Panc1 (cell line): ENCODE measurements at regions of chr19 and their contacts with region 1.

Region 1: DNA sequence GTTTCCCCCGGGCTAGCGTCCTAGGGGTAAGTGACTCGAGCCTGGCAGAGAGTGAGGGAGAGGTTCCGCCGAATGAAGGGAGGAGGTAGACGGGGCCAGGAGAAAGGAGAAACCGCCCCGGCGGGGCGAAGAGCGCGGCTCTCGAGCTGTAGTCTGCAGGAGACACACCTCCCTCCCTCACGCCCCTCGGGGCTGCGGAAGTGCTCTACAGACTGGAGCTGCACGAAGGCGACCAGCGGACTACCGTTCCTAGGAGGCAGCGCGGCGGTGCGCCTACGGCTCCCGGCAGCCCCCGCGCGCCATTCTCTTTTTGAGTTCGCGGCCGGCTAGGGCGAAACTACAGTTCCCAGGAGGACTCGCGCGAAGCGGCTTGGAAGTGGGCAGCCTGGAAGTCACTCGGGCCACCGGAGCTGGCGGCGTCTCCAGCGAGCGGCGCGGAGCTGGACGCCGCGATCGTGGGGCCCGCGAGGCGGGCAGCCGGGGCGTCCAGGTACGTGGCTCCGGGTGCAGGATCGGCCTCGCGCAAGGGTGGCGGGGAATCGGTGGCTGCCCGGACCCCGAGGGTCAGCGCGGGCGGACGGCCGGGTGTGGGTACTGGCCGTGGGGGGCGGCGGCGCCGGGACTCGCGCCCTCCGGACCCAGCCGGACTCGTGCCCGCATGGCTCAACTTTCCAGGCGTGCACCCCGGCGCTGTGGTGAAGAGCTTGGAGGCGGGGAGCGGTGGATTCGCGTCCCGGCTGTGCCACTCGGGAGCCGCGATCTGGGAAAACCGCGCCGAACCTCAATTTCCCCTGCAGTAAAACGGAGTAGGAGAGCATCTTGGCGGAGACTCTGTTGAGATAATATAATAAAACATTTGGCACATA is at the start of gene SIPA1L3:
- DNase-seq: peak; percentile 80
- ATAC-seq: peak; percentile 98
- H3K4me3 ChIP-seq: peak within 1 kb of the TSS; percentile 76 to 97
- H3K27ac ChIP-seq: peak within 1 kb of the TSS; percentile 75
- H3K4me1 ChIP-seq: peaks cover 10% of the 10 kb centered on the region
- H3K27me3 ChIP-seq: no peaks in the 10 kb centered on the region
- CTCF ChIP-seq: no peak
- total RNA-seq, gene SIPA1L3: 66.3 TPM

Region 2: GRCh38 chr19:37931881-37932655 is 25.0 kb after region 1 on chr19:
- CTCF ChIA-PET with region 1: interaction called, 12 read pairs
- POLR2A ChIA-PET with region 1: interaction called, 6 read pairs
- in situ Hi-C with region 1: no loop called
- intact Hi-C with region 1: no loop called
- DNase-seq: peak; percentile 47
- ATAC-seq: peak; percentile 87
- H3K4me3 ChIP-seq: peak overlapping the region; percentile 53 to 74
- H3K27ac ChIP-seq: peak overlapping the region; percentile 96
- H3K4me1 ChIP-seq: peaks cover 35% of the 10 kb centered on the region
- H3K27me3 ChIP-seq: no peaks in the 10 kb centered on the region
- CTCF ChIP-seq: no peak

Region 3: DNA sequence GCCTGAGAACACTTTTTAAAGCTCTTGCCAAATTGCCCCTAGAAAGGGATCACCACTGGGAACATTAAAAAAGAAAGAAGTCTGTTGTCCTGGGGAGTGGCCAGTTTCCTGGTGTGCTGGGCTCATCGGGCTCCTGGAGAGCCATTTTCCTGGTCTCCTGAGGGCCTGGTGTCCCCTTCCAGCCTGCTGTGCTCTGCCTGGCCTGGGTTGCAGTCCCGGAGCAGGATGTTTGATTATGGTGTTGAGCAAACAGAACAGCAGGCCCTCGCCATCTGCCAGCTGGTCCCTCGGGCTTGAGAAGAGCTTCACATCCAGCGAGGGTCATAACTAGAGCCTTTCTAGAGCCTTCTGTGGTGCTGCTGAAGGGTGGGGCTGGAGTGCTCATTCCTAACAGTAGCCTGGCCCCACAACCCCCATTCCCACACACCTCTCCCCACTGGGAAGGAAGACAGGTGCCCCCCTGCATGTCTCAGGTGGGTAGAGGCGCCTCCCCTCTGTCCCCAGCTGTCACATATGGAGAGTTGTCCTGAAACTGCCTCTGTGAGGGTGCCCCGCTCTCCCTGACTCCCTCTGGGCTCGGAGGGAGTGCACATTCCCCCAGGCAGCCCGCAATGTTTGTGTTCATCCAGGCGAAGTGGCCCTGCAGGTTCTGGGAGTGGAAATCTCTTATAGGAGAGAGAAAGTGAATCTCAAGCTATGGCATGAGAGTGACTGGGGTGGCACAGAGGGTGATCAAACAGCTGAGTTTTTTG is 151.0 kb after region 1 on chr19:
- CTCF ChIA-PET with region 1: interaction called, 4 read pairs
- POLR2A ChIA-PET with region 1: no interaction called
- in situ Hi-C with region 1: no loop called
- intact Hi-C with region 1: loop called (anchors 10 kb)
- DNase-seq: no peak
- ATAC-seq: peak; percentile 75
- H3K4me3 ChIP-seq: peak overlapping the region in 1 of 2 experiments; percentile 6; a peak in 2 of 4 replicates
- H3K27ac ChIP-seq: peak overlapping the region; percentile 62
- H3K4me1 ChIP-seq: peaks cover 11% of the 10 kb centered on the region
- H3K27me3 ChIP-seq: no peaks in the 10 kb centered on the region
- CTCF ChIP-seq: no peak

Region 4: GRCh38 chr19:38213911-38214625 is 307.0 kb after region 1 on chr19:
- CTCF ChIA-PET with region 1: no interaction called
- POLR2A ChIA-PET with region 1: interaction called, 16 read pairs
- in situ Hi-C with region 1: no loop called
- intact Hi-C with region 1: no loop called
- DNase-seq: no peak
- ATAC-seq: peak; percentile 51
- H3K4me3 ChIP-seq: no peak overlapping the region
- H3K27ac ChIP-seq: no peak overlapping the region
- H3K4me1 ChIP-seq: peaks cover 16% of the 10 kb centered on the region
- H3K27me3 ChIP-seq: no peaks in the 10 kb centered on the region
- CTCF ChIP-seq: no peak